Activated T-helper 2 cell treated with anti-CD3 and anti-CD28 coated beads, Interferon-gamma antibody, Interleukin-2, Interleukin-4, amounts not matched to agents 10 μg/mL and 5 μg/mL and 100 μg/mL, durations not matched to agents 14 hours and 24 hours and 36 hours (primary cell): ENCODE measurements at regions of chr17 and their contacts with region 1.

Region 1: DNA sequence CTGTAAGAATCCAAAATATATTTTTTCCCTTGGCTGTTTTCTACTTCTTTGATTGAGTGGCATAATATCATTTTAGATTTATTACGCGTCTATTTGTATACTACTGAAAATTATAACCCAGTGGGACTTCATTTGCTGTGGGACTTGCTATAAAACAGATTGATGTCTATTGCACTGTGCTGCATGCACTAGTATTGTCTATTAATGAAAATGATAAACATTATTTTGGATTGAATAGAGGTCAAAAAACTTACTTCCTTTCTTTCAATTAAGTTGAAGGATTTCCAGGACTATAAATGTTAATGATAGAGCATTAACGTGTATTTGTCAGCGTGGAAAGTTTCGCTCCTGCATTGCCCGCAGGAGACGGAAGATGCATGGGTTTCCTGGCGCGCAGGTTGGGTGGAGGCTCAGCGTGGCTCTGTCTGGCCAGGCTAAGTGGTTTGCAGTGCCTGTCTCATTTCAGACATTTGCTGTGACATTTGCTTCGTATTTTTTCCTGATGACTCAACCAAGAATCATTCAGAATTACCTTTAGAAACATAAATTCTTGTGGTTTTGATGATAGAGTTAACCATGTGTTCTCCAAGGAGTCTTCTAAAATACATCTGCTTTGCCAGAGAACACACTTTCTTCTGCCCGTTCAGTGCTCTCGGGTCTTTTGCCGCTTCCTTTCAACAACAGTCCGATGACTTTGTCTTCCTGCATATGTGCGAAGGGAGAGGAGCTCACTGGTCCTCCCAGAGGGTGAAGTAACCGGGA is 216.7 kb downstream of the RPTOR start:
- DNase-seq: peak; percentile 73
- H3K4me3 Mint-ChIP-seq: peak overlapping the region; percentile 66
- H3K27ac Mint-ChIP-seq: peak overlapping the region; percentile 99
- H3K4me1 Mint-ChIP-seq: peaks cover 72% of the 10 kb centered on the region
- H3K27me3 Mint-ChIP-seq: no peaks in the 10 kb centered on the region

Region 2: GRCh38 chr17:80559825-80560251 is 201.5 kb before region 1 on chr17:
- intact Hi-C with region 1: no loop called
- DNase-seq: no peak
- H3K4me3 Mint-ChIP-seq: no peak overlapping the region
- H3K27ac Mint-ChIP-seq: no peak overlapping the region
- H3K4me1 Mint-ChIP-seq: no peaks in the 10 kb centered on the region
- H3K27me3 Mint-ChIP-seq: no peaks in the 10 kb centered on the region

Region 3: GRCh38 chr17:80605326-80606066 is 155.8 kb before region 1 on chr17:
- intact Hi-C with region 1: loop called (anchors 2 kb)
- DNase-seq: peak; percentile 39
- H3K4me3 Mint-ChIP-seq: no peak overlapping the region
- H3K27ac Mint-ChIP-seq: peak overlapping the region; percentile 74
- H3K4me1 Mint-ChIP-seq: peaks cover 57% of the 10 kb centered on the region
- H3K27me3 Mint-ChIP-seq: no peaks in the 10 kb centered on the region

Region 4: DNA sequence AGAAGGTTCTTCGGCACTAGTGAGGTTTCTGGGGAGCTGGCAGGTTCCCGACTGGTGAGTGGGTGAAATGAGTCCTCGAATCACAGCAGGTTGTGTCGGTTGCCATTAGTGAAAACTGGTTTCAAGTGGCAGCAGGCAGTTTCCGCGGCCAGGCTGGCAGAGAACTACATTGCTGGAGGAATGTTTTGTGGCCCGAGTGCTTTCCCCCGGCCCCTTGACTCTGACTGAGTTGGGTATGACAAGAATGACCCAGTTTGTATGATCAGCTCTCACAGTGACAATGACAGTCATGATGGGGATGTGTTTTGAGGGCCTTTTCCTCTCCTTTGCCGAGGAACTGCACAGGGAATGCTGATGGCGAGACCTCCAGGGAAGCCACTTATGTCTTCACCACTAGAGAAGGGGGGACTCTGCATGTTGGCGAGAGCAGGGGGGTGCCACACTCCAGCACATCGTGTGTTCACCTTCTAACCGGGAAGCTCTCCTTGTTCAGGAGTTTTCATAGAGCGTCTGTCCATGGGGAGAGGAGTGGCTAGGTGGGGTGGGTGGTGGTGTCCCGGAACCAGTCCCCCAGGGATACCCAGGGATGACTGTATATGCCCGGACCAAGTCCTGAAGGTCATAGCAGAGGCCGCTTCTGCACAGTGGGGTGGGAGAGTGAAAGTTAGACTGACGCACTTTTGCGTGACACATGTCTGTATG is 24.3 kb after region 1 on chr17:
- intact Hi-C with region 1: loop called (anchors 1 kb)
- DNase-seq: no peak
- H3K4me3 Mint-ChIP-seq: peak overlapping the region; percentile 37
- H3K27ac Mint-ChIP-seq: peak overlapping the region; percentile 89
- H3K4me1 Mint-ChIP-seq: peaks cover 81% of the 10 kb centered on the region
- H3K27me3 Mint-ChIP-seq: no peaks in the 10 kb centered on the region

Region 5: DNA sequence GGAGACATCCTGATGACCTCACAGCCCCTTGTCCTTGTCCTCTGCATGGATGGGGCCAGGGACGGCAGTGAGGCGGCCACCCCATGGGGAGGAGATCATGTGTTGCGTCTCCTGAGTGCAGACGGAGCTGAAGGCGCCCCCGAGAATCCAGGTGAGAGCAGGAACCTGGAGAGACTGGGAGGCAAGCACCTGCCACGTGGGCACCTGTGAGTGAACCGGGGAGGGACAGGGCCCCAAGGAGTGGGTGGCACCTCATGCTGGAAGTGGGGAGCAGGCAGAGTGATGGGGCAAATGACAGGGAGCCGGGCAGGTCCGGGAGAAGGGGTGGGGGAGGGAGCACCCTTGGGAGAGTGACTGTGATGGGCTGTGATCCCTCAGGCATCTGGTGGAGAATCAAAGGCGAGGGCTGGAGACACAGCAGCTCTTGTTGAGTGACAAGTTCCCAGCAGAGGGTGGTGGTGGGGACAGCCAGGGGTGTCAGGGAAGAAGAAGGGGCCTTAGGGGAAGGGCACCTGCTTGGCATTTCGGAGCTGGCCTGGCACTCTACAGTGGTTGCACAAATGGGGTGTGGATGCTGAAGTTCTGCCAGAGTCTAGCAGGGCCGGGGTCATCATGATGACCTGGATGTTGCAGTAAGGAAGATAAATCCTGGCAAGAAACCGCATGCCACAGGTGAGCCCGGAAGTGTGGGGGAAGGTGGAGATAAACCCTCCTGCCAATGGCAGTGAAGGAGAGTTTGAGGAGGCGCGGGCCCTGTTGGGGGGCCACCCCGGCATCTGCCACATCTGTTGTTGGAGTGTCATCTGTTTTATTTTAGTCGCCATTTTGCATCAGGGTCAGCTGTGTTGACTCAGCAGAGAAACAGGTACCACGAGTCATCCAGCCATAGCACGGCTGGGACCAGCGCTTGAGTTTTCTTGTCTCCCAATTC is 56.3 kb after region 1 on chr17:
- intact Hi-C with region 1: loop called (anchors 2 kb)
- DNase-seq: no peak
- H3K4me3 Mint-ChIP-seq: no peak overlapping the region
- H3K27ac Mint-ChIP-seq: peak overlapping the region; percentile 14
- H3K4me1 Mint-ChIP-seq: peaks cover 50% of the 10 kb centered on the region
- H3K27me3 Mint-ChIP-seq: no peaks in the 10 kb centered on the region

Region 6: GRCh38 chr17:80855948-80856862 is 94.9 kb after region 1 on chr17:
- intact Hi-C with region 1: loop called (anchors 1 kb)
- DNase-seq: peak; percentile 88
- H3K4me3 Mint-ChIP-seq: peak overlapping the region; percentile 37
- H3K27ac Mint-ChIP-seq: peak overlapping the region; percentile 97
- H3K4me1 Mint-ChIP-seq: peaks cover 69% of the 10 kb centered on the region
- H3K27me3 Mint-ChIP-seq: no peaks in the 10 kb centered on the region